ENCODE measurements at regions of chr5 and their contacts with region 1.

Region 1: GRCh38 chr5:112995764-112996618 is 19.4 kb downstream of the DCP2 start:
- DNase-seq: peak in 1 of 2 experiments; percentile 88
- H3K4me3 ChIP-seq: no peak overlapping the region
- H3K27ac ChIP-seq: no peak overlapping the region
- H3K4me1 ChIP-seq: no peaks in the 10 kb centered on the region; a peak in 1 of 7 replicates
- H3K27me3 ChIP-seq: no peaks in the 10 kb centered on the region
- CTCF ChIP-seq: peak; percentile 38 to 82 (median 72)
- EP300 ChIP-seq: no peak
- POLR2A ChIP-seq: no peak
- RAD21 ChIP-seq: peak; percentile 86 to 88

Region 2: DNA sequence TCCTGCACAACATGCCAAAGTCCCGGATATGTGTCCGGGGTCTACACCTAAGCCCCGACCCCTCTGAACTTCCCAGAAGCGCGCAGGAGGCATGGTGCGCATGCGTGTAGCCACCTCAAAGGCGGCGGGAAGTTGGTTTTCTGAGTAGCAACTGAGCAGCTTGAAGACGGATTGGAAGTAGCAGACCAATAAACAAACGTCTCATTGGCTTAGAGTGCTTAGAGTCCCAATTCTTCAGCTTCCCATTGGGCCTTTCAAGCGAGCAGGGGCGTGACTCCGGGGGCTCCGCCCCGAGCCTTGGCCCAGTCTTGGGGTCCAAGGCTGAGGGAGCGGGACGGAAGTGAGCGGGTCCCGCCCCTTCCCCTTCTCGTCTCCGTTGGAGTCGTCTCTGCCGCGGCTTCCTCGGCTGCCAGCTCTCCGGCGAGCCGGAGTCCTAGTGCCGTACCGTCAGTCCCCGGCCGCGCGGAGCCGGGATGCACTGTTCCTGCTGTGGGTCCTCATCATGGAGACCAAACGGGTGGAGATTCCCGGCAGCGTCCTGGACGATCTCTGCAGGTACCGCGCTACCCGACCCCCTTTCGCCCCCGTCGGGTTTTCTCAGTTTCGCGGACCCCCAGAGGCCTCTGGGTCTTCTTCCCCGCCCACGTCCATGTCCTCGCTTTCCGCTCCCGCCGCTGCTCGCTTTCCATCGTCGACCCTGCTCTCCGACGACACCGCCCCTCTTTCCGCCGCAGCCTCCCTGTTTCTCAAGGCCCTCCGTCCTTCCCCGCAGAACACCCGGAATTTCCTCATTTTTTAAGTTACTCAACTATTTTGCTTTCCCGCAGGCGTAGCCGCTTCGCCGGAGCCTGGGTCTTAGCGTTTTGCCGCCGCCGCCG is 19.3 kb before region 1 on chr5 and contains the start of gene DCP2:
- CTCF ChIA-PET with region 1: interaction called, 11 read pairs
- POLR2A ChIA-PET with region 1: interaction called, 5 read pairs
- DNase-seq: peak; percentile 94 to 96
- H3K4me3 ChIP-seq: peak within 1 kb of the TSS; percentile 54 to 97 (median 91)
- H3K27ac ChIP-seq: peak within 1 kb of the TSS; percentile 93
- H3K4me1 ChIP-seq: peaks cover 0 to 6% (median 2%) of the 10 kb centered on the region in 4 experiments; a peak in 3 of 7 replicates
- H3K27me3 ChIP-seq: no peaks in the 10 kb centered on the region
- CTCF ChIP-seq: peak in 1 of 3 experiments; percentile 2; a peak in 1 of 4 replicates
- EP300 ChIP-seq: no peak
- POLR2A ChIP-seq: peak; percentile 68 to 98
- RAD21 ChIP-seq: no peak
- total RNA-seq, gene DCP2: 162 and 173 TPM in 2 replicates

Region 3: GRCh38 chr5:113029614-113030013 is 33.6 kb after region 1 on chr5:
- CTCF ChIA-PET with region 1: interaction called, 16 read pairs
- POLR2A ChIA-PET with region 1: interaction called, 5 read pairs
- DNase-seq: no peak
- H3K4me3 ChIP-seq: no peak overlapping the region
- H3K27ac ChIP-seq: no peak overlapping the region
- H3K4me1 ChIP-seq: peaks cover 4 to 10% (median 9%) of the 10 kb centered on the region in 4 experiments
- H3K27me3 ChIP-seq: no peaks in the 10 kb centered on the region
- CTCF ChIP-seq: no peak
- EP300 ChIP-seq: no peak
- POLR2A ChIP-seq: 0 out of 3 replicates have a peak, but pooled peaks of 1 of the 2 experiments have one; percentile 12
- RAD21 ChIP-seq: no peak

Region 4: DNA sequence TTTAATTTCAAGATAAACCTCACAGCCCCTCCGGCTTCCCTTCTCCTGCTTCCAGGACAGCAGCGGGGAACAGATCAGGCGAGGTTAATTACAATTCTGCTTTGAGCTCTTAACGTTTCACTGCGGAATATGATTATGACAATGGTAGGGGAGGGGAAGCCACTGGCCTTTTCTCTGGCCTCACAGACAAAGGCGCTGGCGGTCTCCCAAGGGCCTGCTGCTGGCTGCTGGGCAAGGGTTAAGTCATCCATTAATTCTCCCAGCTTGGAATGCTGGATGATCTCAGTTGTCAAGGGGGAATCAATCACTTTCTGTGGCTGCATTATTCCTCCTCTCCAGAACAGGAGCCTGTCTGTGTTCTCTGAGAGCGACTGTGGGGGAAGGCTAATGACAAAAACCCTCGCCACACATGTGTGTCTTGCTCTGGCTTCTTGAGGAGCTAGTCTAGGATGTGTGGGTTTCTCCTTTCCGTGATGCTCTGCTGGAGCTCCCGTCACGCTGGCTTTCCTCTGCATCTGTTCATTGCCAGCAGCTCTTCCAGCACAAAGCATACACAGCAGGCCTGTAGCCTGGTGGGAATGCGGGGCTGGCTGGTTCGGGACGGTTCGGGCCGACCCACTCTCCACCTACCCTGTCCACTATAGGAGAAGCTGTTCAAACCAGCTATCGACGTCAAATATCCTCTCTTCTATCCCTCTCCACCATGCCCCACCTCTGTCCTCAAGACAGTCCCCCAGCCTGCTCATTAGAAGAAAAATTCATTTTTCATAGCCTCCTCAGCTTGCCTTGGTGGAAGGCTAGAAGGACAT is 63.4 kb after region 1 on chr5:
- CTCF ChIA-PET with region 1: interaction called, 13 read pairs
- POLR2A ChIA-PET with region 1: no interaction called
- DNase-seq: no peak
- H3K4me3 ChIP-seq: no peak overlapping the region
- H3K27ac ChIP-seq: no peak overlapping the region
- H3K4me1 ChIP-seq: no peaks in the 10 kb centered on the region
- H3K27me3 ChIP-seq: no peaks in the 10 kb centered on the region
- CTCF ChIP-seq: no peak
- EP300 ChIP-seq: no peak
- POLR2A ChIP-seq: no peak
- RAD21 ChIP-seq: no peak

Region 5: DNA sequence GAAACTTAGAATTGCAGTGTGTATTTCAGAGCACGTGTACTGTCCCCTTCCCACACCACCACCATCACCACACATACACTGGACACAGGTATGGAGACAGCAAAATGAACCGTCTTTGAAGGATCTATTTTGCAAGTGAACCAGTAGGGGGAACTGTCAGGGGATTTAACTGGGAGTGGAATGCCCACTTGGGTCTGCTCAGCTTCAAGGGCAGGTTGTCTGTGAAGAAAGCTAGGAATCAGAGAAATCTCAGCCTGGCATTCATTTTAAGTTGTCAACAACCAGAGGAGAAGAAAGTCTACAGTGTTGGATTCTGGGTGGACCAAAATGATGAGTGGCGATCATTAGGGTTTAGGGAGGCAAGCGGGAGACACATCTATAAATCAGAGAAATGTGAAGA is 127.6 kb after region 1 on chr5:
- CTCF ChIA-PET with region 1: interaction called, 11 read pairs
- POLR2A ChIA-PET with region 1: no interaction called
- DNase-seq: no peak
- H3K4me3 ChIP-seq: no peak overlapping the region
- H3K27ac ChIP-seq: no peak overlapping the region
- H3K4me1 ChIP-seq: peaks cover 0 to 2% (median 0%) of the 10 kb centered on the region in 4 experiments; a peak in 1 of 7 replicates
- H3K27me3 ChIP-seq: no peaks in the 10 kb centered on the region
- CTCF ChIP-seq: peak; percentile 14 to 68 (median 57)
- EP300 ChIP-seq: no peak
- POLR2A ChIP-seq: no peak
- RAD21 ChIP-seq: peak; percentile 60 to 73